Endothelial cell of umbilical vein (primary cell): ENCODE measurements at regions of chr4 and their contacts with region 1.

Region 1: GRCh38 chr4:44448548-44449461 is at the start of gene KCTD8:
- DNase-seq: peak; percentile 78
- H3K4me3 ChIP-seq: peak within 1 kb of the TSS in 2 of 3 experiments; percentile 30 to 36
- H3K27ac ChIP-seq: no peak within 1 kb of the TSS
- H3K4me1 ChIP-seq: peaks cover 10% of the 10 kb centered on the region
- H3K27me3 ChIP-seq: peaks cover 25 to 66% of the 10 kb centered on the region in 2 experiments
- CTCF ChIP-seq: peak; percentile 73 to 83
- POLR2A ChIP-seq: no peak
- total RNA-seq, gene KCTD8: 0.80 and 0.88 TPM in 2 replicates

Region 2: DNA sequence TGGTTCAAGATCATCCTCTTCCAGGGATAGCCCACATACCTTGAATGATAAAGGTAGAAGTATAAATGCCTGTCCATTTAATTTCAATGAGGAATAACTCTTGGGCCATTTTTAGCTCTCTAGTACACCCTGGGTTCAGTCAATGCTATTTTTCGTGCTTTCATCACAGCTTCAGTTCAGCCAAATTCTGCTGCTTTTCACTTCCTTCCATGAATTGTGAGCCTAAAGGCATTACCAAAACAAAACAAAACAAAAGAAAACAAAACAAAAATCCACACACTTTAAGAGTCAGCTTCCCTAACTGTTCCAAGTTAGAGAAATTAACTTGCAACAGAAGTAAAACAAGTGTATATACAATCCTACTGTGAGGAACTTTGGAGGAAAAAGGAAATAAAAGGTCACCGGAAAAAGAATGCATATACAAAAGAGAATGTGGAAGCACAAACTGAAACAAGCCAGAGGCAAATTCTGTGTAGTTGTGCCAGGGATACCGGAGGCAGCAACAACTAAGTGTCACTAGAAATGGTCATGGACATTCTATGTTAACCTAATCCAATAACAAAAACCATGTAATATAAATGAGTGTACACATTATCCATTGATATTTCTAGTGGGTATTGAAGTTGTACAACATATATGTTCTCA is 423.3 kb before region 1 on chr4:
- CTCF ChIA-PET with region 1: no interaction called
- POLR2A ChIA-PET with region 1: no interaction called
- dilution Hi-C with region 1: no loop called
- intact Hi-C with region 1: loop called (anchors 10 kb)
- DNase-seq: peak; percentile 72
- H3K4me3 ChIP-seq: peak overlapping the region in 1 of 3 experiments; percentile 1
- H3K27ac ChIP-seq: peak overlapping the region; percentile 52
- H3K4me1 ChIP-seq: peaks cover 16% of the 10 kb centered on the region
- H3K27me3 ChIP-seq: no peaks in the 10 kb centered on the region
- CTCF ChIP-seq: no peak
- POLR2A ChIP-seq: no peak